PC-3 (cell line): ENCODE measurements at regions of chr3 and their contacts with region 1.

Region 1: GRCh38 chr3:101803173-101803782 is 24.3 kb downstream of the NXPE3 start:
- DNase-seq: peak; percentile 85
- ATAC-seq: peak; percentile 100
- H3K4me3 ChIP-seq: no peak overlapping the region
- H3K27ac ChIP-seq: no peak overlapping the region
- H3K4me1 ChIP-seq: no peaks in the 10 kb centered on the region; the same call in 1 of the 2 replicates
- H3K27me3 ChIP-seq: no peaks in the 10 kb centered on the region
- CTCF ChIP-seq: peak; percentile 92

Region 2: GRCh38 chr3:101695779-101696372 is 107.4 kb before region 1 on chr3:
- CTCF ChIA-PET with region 1: no interaction called
- POLR2A ChIA-PET with region 1: no interaction called
- intact Hi-C with region 1: loop called (anchors 2 kb)
- DNase-seq: peak; percentile 91
- ATAC-seq: peak; percentile 38; the same call in 1 of the 2 replicates
- H3K4me3 ChIP-seq: no peak overlapping the region
- H3K27ac ChIP-seq: no peak overlapping the region
- H3K4me1 ChIP-seq: no peaks in the 10 kb centered on the region
- H3K27me3 ChIP-seq: no peaks in the 10 kb centered on the region
- CTCF ChIP-seq: peak; percentile 76